ENCODE measurements at regions of chr15 and their contacts with region 1.

Region 1: GRCh38 chr15:60397772-60398445 is at the start of gene ANXA2:
- DNase-seq: peak; percentile 90
- total RNA-seq, gene ANXA2: 177 TPM

Region 2: DNA sequence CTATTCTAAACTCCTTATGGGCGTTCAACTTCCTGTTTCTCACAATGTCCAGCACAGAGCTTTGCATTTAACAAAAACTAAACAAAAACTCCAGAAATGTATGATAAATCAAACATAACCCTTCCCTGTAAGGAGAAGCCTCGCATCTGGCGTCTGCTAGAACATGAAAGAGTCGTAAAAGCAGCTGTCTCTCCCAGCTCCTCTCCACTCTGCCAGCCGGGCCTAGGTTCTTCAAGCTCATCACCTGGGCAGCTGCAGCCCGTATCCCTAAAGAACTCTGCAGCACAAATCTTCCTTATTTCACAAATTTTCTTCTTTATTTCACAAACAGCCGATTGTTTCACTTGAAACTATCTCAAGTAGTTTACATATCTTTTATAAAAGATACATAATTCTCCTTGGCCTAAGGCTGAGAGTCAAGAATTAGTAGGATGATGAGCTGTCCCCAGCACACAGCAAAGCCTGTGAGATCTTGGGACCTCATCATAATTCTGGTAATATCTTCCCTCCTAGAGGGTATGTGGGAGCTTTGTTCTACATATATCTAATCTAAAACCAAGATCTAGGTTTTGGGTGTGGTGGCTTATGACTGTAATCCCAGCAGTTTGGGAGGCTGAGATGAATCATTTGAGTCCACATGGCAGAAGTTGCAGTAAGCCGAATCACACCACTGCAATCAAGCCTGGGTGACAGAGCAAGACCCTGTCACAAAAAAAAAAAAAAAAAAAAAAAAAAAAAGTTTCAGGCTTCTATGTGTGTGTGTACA is 35.4 kb before region 1 on chr15:
- intact Hi-C with region 1: loop called (anchors 2 kb)
- DNase-seq: no peak

Region 3: GRCh38 chr15:60374628-60375081 is 23.3 kb before region 1 on chr15:
- intact Hi-C with region 1: loop called (anchors 2 kb)
- DNase-seq: no peak

Measured in cardiac septum (tissue), 1 donor.